ENCODE measurements at regions of chr6 and their contacts with region 1.

Region 1: GRCh38 chr6:154675602-154676088 is 57.6 kb upstream of the SCAF8 start:
- DNase-seq: peak; percentile 80 to 90
- ATAC-seq: peak; percentile 100

Region 2: GRCh38 chr6:154164397-154165165 is 511.1 kb before region 1 on chr6:
- intact Hi-C with region 1: loop called in 1 of 2 experiments (anchors 10 kb)
- DNase-seq: no peak
- ATAC-seq: no peak

Region 3: GRCh38 chr6:154805288-154805911 is 129.8 kb after region 1 on chr6:
- intact Hi-C with region 1: loop called in 1 of 2 experiments (anchors 5 kb)
- DNase-seq: no peak
- ATAC-seq: no peak